AG04450 (cell line): ENCODE measurements at regions of chr10 and their contacts with region 1.

Region 1: GRCh38 chr10:14593806-14594205 is 180.9 kb downstream of the FAM107B start:
- DNase-seq: no peak
- H3K4me3 ChIP-seq: no peak overlapping the region
- H3K27ac ChIP-seq: no peak overlapping the region
- H3K27me3 ChIP-seq: no peaks in the 10 kb centered on the region
- CTCF ChIP-seq: no peak

Region 2: DNA sequence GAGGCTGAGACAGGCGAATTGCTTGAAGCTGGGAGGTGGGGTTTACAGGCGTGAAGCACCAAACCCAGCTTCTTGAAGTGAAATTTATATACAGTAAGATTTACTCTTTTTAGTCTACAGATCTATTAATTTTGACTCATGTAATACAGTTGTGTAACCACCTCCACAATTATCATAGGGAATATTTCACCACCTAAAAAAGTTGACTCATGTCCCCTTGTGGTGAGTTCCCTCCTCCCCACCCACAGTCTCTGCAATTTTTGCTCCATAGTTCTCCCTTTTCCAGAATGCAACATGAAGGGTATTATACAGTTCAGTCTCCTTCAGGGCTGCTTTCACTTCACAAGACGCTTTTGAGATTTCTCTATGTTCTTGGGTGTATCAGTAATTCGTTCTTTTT is 24.0 kb after region 1 on chr10:
- CTCF ChIA-PET with region 1: no interaction called
- POLR2A ChIA-PET with region 1: interaction called, 10 read pairs
- DNase-seq: no peak
- H3K4me3 ChIP-seq: no peak overlapping the region
- H3K27ac ChIP-seq: no peak overlapping the region
- H3K27me3 ChIP-seq: no peaks in the 10 kb centered on the region
- CTCF ChIP-seq: no peak